Breast epithelium (tissue), 4 donors: ENCODE measurements at regions of chr16 and their contacts with region 1.

Region 1: DNA sequence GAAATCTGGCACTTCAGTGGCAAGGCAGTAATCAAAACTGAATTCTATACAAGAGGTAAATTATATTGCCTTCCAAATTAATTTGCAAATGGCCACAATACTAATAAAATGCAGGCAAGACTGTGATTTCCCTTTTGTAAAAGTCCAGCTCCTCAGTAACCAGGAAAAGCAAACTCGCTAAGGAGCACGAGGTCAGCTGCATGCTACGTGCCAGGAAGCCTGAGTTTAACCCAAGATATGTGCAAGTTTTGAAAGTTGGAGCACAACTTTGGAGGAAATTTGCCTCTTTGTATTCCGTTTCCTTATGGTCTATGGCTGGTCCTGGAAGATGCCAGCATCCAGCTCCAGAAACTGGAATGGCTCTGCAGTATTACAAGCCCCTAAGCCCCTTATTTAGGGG is 226.8 kb upstream of the DYNLRB2 start:
- DNase-seq: no peak
- H3K4me3 ChIP-seq: no peak overlapping the region
- H3K27ac ChIP-seq: no peak overlapping the region
- H3K4me1 ChIP-seq: no peaks in the 10 kb centered on the region
- H3K27me3 ChIP-seq: no peaks in the 10 kb centered on the region
- CTCF ChIP-seq: no peak
- POLR2A ChIP-seq: no peak

Region 2: GRCh38 chr16:80875616-80876015 is 561.6 kb after region 1 on chr16:
- intact Hi-C with region 1: no loop called
- DNase-seq: no peak
- H3K4me3 ChIP-seq: no peak overlapping the region
- H3K27ac ChIP-seq: no peak overlapping the region
- H3K4me1 ChIP-seq: no peaks in the 10 kb centered on the region
- H3K27me3 ChIP-seq: no peaks in the 10 kb centered on the region
- CTCF ChIP-seq: no peak
- POLR2A ChIP-seq: no peak

Region 3: GRCh38 chr16:81838794-81839193 is 1524.8 kb after region 1 on chr16:
- intact Hi-C with region 1: loop called (anchors 5 kb)
- DNase-seq: no peak
- H3K4me3 ChIP-seq: no peak overlapping the region
- H3K27ac ChIP-seq: no peak overlapping the region
- H3K4me1 ChIP-seq: no peaks in the 10 kb centered on the region
- H3K27me3 ChIP-seq: no peaks in the 10 kb centered on the region
- CTCF ChIP-seq: no peak
- POLR2A ChIP-seq: no peak